ENCODE measurements at regions of chr1 and their contacts with region 1.

Region 1: GRCh38 chr1:34460193-34460592 is 283.5 kb downstream of the C1orf94 start:
- DNase-seq: peak; percentile 74
- ATAC-seq: peak; percentile 64
- H3K4me3 Mint-ChIP-seq: no peak overlapping the region
- H3K27ac Mint-ChIP-seq: no peak overlapping the region
- H3K4me1 Mint-ChIP-seq: no peaks in the 10 kb centered on the region
- H3K27me3 Mint-ChIP-seq: peaks cover 8% of the 10 kb centered on the region
- CTCF ChIP-seq: peak; percentile 61

Region 2: DNA sequence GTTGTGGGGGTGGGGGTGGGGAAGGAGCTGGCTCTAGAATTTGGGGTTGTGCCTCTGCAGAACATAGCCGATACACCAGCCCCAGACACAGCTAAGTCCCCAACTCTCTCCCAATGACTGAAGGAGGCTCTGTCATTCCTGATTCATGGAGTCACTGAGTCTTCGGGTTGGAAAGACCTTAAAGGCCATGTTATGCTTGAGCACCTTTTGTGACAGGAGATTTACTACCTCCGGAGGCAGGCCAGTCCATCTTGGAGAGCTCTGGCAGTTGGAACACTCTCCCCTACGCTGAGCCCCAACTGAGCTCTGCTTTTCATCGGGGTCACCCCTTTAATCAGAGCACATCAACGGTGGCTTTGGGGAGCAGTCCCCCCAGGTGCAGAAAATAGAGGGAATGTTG is 10.2 kb after region 1 on chr1:
- CTCF ChIA-PET with region 1: interaction called, 18 read pairs
- POLR2A ChIA-PET with region 1: no interaction called
- DNase-seq: no peak
- ATAC-seq: no peak
- H3K4me3 Mint-ChIP-seq: no peak overlapping the region
- H3K27ac Mint-ChIP-seq: no peak overlapping the region
- H3K4me1 Mint-ChIP-seq: peaks cover 12% of the 10 kb centered on the region
- H3K27me3 Mint-ChIP-seq: no peaks in the 10 kb centered on the region; the same call in none of the 2 replicates
- CTCF ChIP-seq: no peak

Region 3: DNA sequence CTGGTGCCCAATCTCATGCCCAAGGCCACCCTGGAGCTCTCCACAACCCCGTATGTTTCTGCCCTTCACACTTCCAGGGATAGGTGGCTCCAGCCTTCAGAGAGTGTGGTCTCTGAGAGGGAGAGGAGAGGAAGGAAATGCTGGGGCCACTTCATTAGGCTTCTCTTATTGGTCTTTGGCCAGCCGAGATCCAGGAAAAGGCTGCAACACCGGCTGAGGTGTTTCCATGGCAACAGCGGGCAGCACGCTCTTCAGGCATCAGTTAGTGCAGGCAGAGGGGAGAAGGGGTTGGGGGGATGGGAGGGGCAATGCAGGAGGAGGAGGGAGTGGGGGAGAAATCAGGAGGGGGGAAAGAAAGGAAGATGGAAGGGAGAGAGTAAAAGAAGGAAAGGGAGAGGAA is 19.5 kb after region 1 on chr1:
- CTCF ChIA-PET with region 1: interaction called, 11 read pairs
- POLR2A ChIA-PET with region 1: no interaction called
- DNase-seq: peak; percentile 33
- ATAC-seq: peak; percentile 58
- H3K4me3 Mint-ChIP-seq: no peak overlapping the region
- H3K27ac Mint-ChIP-seq: no peak overlapping the region
- H3K4me1 Mint-ChIP-seq: peaks cover 8% of the 10 kb centered on the region
- H3K27me3 Mint-ChIP-seq: peaks cover 3% of the 10 kb centered on the region
- CTCF ChIP-seq: no peak

Region 4: DNA sequence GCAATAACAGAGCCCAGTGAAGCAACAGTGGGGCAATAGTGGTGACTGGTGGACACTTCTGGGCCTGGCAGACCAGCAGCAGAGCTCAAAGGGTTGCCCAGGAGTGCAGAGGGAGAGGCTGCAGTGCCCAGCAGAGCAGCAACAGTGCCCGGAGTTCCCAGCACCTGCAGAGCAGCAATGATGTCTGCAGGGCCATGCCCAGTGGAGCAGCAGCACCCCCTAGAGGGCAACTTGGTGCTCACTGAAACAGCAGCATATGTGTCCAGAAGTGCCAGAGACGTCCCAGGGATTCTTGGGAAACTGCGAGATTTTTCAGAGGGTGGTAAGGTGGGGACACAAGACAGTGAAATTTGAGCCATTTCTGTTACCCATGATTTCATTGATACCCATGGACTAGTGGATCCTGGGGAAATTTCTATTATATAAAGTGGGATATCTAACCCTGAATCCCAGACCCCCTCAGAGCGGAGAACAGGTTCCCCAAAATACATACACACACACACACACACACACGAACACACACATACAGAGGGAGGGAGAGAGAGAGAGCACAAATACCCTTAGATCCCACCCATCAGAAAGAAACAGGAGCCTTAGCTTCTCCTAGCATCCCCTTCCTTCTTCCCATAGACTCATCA is 137.8 kb after region 1 on chr1:
- CTCF ChIA-PET with region 1: interaction called, 15 read pairs
- POLR2A ChIA-PET with region 1: no interaction called
- DNase-seq: peak; percentile 94
- ATAC-seq: peak; percentile 94
- H3K4me3 Mint-ChIP-seq: no peak overlapping the region
- H3K27ac Mint-ChIP-seq: no peak overlapping the region
- H3K4me1 Mint-ChIP-seq: peaks cover 9% of the 10 kb centered on the region
- H3K27me3 Mint-ChIP-seq: peaks cover 9% of the 10 kb centered on the region
- CTCF ChIP-seq: peak; percentile 93